PC-9 (cell line): ENCODE measurements at regions of chr3 and their contacts with region 1.

Region 1: DNA sequence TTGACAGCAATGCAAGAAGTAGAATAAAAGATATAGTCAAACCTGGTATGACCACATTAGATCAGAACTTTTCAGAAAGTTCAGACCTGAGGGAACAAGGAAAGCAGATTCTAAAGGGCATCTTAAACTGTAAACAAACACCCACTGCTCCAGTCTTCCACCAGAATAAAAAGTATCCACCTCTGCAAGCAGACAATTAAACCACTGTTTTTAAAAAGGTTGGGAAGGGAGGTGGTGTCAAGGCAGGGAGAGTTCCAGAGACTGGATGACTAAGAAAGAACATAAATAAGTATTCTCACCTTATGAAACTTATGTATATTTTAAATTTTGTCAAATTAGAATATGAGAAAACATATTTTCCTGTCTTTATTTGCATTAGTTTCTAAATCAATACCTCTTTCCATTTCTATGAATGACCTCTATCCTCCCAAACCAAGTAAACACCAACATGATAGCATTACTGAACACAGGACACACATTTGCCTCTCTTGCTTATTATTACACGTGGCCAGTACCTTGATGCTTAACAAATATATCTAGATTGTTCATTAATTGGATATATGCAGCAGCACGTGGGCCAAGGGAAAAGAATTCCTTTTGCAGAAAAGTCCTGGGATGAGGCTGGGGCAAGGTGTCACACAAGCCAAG is 31.6 kb downstream of the PIK3CB start:
- DNase-seq: no peak
- H3K4me3 ChIP-seq: no peak overlapping the region
- H3K27ac ChIP-seq: no peak overlapping the region
- H3K4me1 ChIP-seq: no peaks in the 10 kb centered on the region
- H3K27me3 ChIP-seq: no peaks in the 10 kb centered on the region
- CTCF ChIP-seq: no peak

Region 2: DNA sequence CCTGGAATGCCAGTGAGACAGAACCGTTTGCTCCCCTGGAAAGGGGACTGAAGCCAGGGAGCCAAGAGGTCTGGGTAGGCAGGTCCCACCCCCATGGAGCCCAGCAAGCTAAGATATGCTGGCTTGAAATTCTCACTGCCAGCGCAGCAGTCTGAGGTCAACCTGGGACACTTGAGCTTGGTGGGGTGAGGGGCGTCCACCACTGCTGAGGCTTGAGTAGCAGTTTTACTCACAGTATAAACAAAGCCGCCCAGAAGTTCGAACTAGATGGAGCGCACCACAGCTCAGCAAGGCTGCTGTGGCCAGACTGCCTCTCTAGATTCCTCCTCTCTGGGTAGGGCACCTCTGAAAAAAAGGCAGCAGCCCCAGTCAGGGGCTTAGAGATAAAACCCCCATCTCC is 242.6 kb before region 1 on chr3:
- CTCF ChIA-PET with region 1: no interaction called
- POLR2A ChIA-PET with region 1: no interaction called
- intact Hi-C with region 1: no loop called
- DNase-seq: no peak
- H3K4me3 ChIP-seq: no peak overlapping the region
- H3K27ac ChIP-seq: no peak overlapping the region
- H3K4me1 ChIP-seq: no peaks in the 10 kb centered on the region
- H3K27me3 ChIP-seq: no peaks in the 10 kb centered on the region
- CTCF ChIP-seq: no peak

Region 3: GRCh38 chr3:138774529-138775253 is 28.4 kb before region 1 on chr3:
- CTCF ChIA-PET with region 1: no interaction called
- POLR2A ChIA-PET with region 1: interaction called, 13 read pairs
- intact Hi-C with region 1: no loop called
- DNase-seq: peak; percentile 45 to 93
- H3K4me3 ChIP-seq: no peak overlapping the region
- H3K27ac ChIP-seq: peak overlapping the region; percentile 54
- H3K4me1 ChIP-seq: peaks cover 19% of the 10 kb centered on the region
- H3K27me3 ChIP-seq: no peaks in the 10 kb centered on the region
- CTCF ChIP-seq: no peak

Region 4: GRCh38 chr3:138824114-138824506 is 21.0 kb after region 1 on chr3:
- CTCF ChIA-PET with region 1: no interaction called
- POLR2A ChIA-PET with region 1: interaction called, 30 read pairs
- intact Hi-C with region 1: no loop called
- DNase-seq: peak in 1 of 2 experiments; percentile 6
- H3K4me3 ChIP-seq: no peak overlapping the region
- H3K27ac ChIP-seq: peak overlapping the region; percentile 54
- H3K4me1 ChIP-seq: peaks cover 14% of the 10 kb centered on the region
- H3K27me3 ChIP-seq: no peaks in the 10 kb centered on the region
- CTCF ChIP-seq: no peak

Region 5: GRCh38 chr3:138856799-138857198 is 53.7 kb after region 1 on chr3:
- CTCF ChIA-PET with region 1: interaction called, 19 read pairs
- POLR2A ChIA-PET with region 1: no interaction called
- intact Hi-C with region 1: no loop called
- DNase-seq: no peak
- H3K4me3 ChIP-seq: no peak overlapping the region
- H3K27ac ChIP-seq: no peak overlapping the region
- H3K4me1 ChIP-seq: peaks cover 8% of the 10 kb centered on the region
- H3K27me3 ChIP-seq: no peaks in the 10 kb centered on the region
- CTCF ChIP-seq: no peak